Activated CD4-positive, alpha-beta T cell treated with anti-CD3 and anti-CD28 coated beads, Interleukin-2, amount 10 ng/mL, durations not matched to agents 7 days and 5 days (primary cell): ENCODE measurements at regions of chr3 and their contacts with region 1.

Region 1: GRCh38 chr3:32989171-32989570 is 37.7 kb downstream of the CCR4 start:
- DNase-seq: no peak
- H3K4me3 Mint-ChIP-seq: no peak overlapping the region
- H3K27ac Mint-ChIP-seq: peak overlapping the region; percentile 63
- H3K4me1 Mint-ChIP-seq: peaks cover 39% of the 10 kb centered on the region
- H3K27me3 Mint-ChIP-seq: no peaks in the 10 kb centered on the region

Region 2: DNA sequence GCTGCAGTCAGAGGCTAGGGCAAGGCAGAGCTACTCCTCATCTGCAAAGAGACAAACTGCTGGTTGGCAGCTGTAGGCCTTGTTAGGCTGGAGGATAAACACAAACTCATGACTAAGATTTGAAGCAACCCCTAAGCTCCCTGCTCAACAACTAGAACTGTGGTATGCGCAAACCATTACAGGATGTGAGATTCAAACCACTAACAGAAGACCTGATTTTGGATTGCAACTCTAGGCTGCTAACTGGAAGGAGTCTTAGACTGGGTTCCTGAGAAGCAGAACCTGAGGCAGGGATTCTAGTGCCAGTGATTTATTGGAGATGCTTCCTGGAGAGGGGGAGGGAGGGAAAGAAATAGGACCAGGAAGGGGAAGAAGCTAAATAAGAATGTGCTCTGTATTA is 15.2 kb before region 1 on chr3:
- CTCF ChIA-PET with region 1: interaction called, 22 read pairs
- POLR2A ChIA-PET with region 1: interaction called, 3 read pairs
- DNase-seq: peak; percentile 69
- H3K4me3 Mint-ChIP-seq: peak overlapping the region; percentile 21
- H3K27ac Mint-ChIP-seq: peak overlapping the region; percentile 87
- H3K4me1 Mint-ChIP-seq: peaks cover 51% of the 10 kb centered on the region
- H3K27me3 Mint-ChIP-seq: no peaks in the 10 kb centered on the region

Region 3: DNA sequence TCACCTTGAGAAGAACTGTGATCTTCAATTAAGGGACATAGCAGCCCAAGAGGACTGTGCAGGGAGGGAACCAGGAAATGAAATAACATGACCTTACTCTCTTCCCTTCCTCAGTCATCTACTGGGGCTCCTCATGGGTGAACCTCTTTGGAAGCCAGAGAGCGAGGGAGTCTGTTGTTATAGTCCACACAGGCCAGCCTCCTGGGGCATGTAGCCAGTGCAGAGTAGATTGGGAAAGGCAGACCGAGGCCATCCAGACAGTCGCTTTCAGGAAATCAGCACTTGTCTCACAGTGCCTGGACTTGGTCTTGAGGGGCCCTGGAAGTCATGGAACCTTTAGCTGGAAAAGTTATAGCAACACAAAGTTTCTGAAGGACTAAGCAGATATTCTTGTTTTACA is 130.7 kb after region 1 on chr3:
- CTCF ChIA-PET with region 1: no interaction called
- POLR2A ChIA-PET with region 1: no interaction called
- DNase-seq: no peak
- H3K4me3 Mint-ChIP-seq: no peak overlapping the region
- H3K27ac Mint-ChIP-seq: no peak overlapping the region
- H3K4me1 Mint-ChIP-seq: peaks cover 8% of the 10 kb centered on the region
- H3K27me3 Mint-ChIP-seq: no peaks in the 10 kb centered on the region

Region 4: GRCh38 chr3:33229066-33229465 is 239.9 kb after region 1 on chr3:
- CTCF ChIA-PET with region 1: no interaction called
- POLR2A ChIA-PET with region 1: no interaction called
- DNase-seq: no peak
- H3K4me3 Mint-ChIP-seq: no peak overlapping the region
- H3K27ac Mint-ChIP-seq: no peak overlapping the region
- H3K4me1 Mint-ChIP-seq: no peaks in the 10 kb centered on the region
- H3K27me3 Mint-ChIP-seq: peaks cover 22% of the 10 kb centered on the region